Right ventricle myocardium superior (tissue), 1 donor: ENCODE measurements at regions of chr9 and their contacts with region 1.

Region 1: GRCh38 chr9:37645903-37646506 is 4.7 kb upstream of the FRMPD1 start:
- DNase-seq: no peak
- ATAC-seq: peak; percentile 70

Region 2: GRCh38 chr9:37528652-37529510 is 117.1 kb before region 1 on chr9:
- intact Hi-C with region 1: no loop called
- DNase-seq: no peak
- ATAC-seq: no peak

Region 3: DNA sequence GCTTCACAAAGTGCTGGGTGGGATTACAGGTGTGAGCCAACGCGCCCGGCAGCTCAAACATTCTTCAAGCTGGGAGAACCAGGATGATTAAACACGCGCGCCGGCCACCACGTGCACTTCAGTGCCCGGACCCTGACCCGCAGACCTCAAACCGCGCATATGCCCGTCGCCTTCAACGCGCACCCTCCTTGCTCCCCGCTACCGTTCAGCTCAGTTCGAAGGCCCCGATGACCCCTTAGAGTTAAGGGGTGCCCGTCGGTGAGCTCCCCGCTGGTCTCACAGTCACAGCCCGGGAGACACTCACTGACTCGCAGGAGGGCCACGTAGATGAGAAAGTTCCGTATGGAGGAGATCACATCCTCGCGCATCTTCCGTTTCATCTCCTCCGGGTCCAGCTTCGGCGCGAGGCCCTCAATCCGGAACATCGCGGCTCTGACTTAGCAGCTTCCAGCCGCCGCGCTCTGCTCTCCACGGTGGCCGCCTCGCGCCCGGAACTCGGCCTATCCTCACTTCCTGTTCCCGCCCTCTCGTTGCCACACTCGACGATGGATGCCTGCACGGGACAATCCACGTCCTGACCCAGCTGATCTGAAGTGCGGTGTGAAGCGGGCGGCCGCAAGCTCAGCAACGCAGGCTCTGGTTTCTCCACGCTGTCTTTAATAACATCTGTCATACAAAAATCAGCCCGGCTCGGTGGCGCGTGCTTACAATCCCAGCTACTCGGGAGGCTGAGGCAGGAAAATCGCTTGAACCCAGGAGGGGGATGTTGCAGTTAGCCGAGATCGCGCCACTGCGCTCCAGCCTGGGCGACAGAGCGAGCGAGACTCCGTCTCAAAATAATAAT is 53.7 kb before region 1 on chr9 and contains the start of gene TOMM5:
- intact Hi-C with region 1: loop called (anchors 10 kb)
- DNase-seq: peak; percentile 96
- ATAC-seq: peak; percentile 99
- total RNA-seq, gene TOMM5: 59.4 TPM